ENCODE measurements at regions of chr13 and their contacts with region 1.

Region 1: DNA sequence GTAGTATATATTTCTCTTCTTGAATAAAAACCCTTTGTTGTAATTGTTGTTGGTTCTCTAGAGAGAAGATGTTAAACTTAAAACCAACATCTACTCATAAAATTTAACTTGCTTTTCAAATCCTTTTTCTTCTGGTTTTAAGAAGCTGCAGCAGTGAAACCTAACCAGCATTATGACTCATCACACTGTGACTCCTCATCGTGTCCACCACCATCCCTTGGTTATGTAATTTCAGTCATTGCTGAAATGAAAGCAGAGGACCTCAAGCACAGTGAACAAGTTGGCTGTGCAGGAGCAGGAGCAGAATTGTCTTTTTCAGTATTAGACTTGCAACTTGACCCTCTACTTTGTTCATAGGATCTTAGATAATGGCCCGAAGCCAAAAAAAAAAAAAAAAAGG is 64.9 kb upstream of the HTR2A start:
- DNase-seq: peak; percentile 38 to 87 (median 82)
- H3K4me3 ChIP-seq: no peak overlapping the region
- H3K27ac ChIP-seq: no peak overlapping the region
- H3K4me1 ChIP-seq: peaks cover 0 to 4% (median 0%) of the 10 kb centered on the region in 4 experiments
- H3K27me3 ChIP-seq: no peaks in the 10 kb centered on the region

Region 2: GRCh38 chr13:46795321-46795720 is 166.4 kb before region 1 on chr13:
- CTCF ChIA-PET with region 1: no interaction called
- POLR2A ChIA-PET with region 1: no interaction called
- DNase-seq: peak in 2 of 3 donors; percentile 9 to 32
- H3K4me3 ChIP-seq: no peak overlapping the region
- H3K27ac ChIP-seq: no peak overlapping the region
- H3K4me1 ChIP-seq: peaks cover 9 to 26% (median 18%) of the 10 kb centered on the region in 4 experiments
- H3K27me3 ChIP-seq: no peaks in the 10 kb centered on the region

Region 3: DNA sequence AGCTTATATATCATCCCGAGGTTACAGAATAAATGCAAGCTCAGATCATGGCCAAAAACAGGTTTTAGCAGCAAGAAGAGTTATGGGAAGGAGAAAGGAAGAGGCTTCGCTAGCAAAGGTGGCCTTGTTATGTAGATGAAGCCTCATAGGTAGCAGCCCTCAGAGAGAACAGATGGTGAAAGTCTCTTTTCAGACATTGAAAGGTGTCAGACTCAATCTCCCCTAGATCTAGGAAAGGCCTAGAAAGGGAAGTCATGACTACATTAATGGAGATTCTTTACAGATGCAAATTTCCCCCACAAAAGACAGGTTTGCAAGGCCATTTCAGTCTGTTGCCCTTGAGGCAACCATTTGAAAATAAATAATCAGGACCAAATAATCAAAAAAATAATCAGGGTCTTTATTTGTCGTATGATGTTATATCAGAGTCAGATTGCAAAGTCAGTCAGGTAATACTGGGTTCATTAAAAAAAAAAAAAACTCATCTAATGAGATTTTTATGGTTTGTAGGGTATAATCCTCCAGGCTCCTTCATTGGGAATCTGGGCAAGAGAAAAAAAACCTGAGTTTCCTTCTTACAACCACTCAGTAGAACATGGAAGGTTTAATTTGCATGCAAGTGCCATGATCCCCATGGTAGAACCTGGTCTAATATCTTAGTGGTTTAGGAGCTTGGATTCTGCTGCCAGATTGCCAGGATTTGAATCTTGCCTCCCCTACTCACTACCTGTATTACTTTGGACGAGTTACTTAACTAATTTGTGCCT is 14.1 kb before region 1 on chr13:
- CTCF ChIA-PET with region 1: interaction called, 13 read pairs
- POLR2A ChIA-PET with region 1: no interaction called
- DNase-seq: no peak
- H3K4me3 ChIP-seq: no peak overlapping the region
- H3K27ac ChIP-seq: no peak overlapping the region
- H3K4me1 ChIP-seq: peaks cover 0 to under 1% (median 0%) of the 10 kb centered on the region in 4 experiments
- H3K27me3 ChIP-seq: no peaks in the 10 kb centered on the region

Region 4: DNA sequence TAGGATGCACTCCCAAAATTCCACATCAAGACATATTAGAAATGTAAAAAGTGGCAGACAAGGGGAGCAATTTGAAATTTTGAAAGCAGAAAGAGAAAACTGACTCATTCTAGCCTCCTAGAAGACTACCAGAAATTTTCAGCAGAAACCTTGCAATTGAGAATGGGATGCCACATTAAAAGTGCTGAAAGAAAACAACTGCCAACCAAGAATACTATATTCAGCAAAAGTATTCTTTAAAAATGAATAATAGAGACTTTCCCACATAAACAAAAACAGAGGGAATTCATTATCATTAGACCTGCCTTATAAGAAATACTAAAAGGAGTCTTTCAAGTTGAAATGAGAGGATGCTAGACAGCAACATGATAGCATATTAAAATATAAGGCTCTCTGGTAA is 13.5 kb after region 1 on chr13:
- CTCF ChIA-PET with region 1: interaction called, 20 read pairs
- POLR2A ChIA-PET with region 1: no interaction called
- DNase-seq: no peak
- H3K4me3 ChIP-seq: no peak overlapping the region
- H3K27ac ChIP-seq: no peak overlapping the region
- H3K4me1 ChIP-seq: no peaks in the 10 kb centered on the region
- H3K27me3 ChIP-seq: no peaks in the 10 kb centered on the region